A549 (cell line): ENCODE measurements at regions of chr14 and their contacts with region 1.

Region 1: DNA sequence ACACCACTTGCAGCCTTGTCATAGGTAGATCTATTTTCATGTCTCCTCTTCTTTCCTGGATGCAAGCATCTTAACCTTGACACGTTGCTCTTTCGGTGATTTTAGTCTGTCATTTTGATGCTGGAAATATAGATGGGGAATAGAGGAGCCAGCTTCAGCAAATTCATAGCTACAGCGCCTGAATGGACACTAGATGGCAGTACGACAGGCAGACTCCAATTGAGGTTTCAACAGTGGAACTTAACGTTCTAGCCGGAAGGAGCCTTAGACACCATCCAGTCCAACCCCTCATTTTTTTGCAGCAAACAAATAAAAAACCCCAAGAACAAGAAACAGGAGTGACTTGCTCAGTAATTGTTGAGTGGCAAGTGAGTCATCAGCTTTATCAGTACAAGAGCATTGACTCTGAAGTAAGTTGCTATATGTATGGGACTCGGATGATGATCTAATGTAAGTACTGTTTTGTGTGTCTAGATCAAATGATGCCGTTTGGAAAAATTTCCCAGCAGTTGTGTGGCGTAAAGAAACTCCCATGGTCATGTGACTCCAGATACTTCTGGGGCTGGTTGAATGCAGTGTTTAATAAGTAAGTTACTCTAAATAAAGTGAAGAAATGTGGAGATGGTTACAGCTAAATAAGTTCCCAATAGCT is 9.0 kb downstream of the DMAC2L start:
- DNase-seq: peak; percentile 74 to 91
- ATAC-seq: peak; percentile 98 to 100
- H3K4me3 ChIP-seq: peak overlapping the region; percentile 34
- H3K27ac ChIP-seq: peak overlapping the region; percentile 57 to 64; a peak in 5 of 6 replicates
- H3K4me1 ChIP-seq: peaks cover 11% of the 10 kb centered on the region
- CTCF ChIP-seq: peak; percentile 88
- EP300 ChIP-seq: no peak
- POLR2A ChIP-seq: no peak
- RAD21 ChIP-seq: peak; percentile 68 to 70

Region 2: GRCh38 chr14:50222061-50222613 is 99.0 kb before region 1 on chr14:
- CTCF ChIA-PET with region 1: no interaction called
- POLR2A ChIA-PET with region 1: no interaction called
- DNase-seq: no peak
- ATAC-seq: no peak
- H3K4me3 ChIP-seq: no peak overlapping the region
- H3K27ac ChIP-seq: no peak overlapping the region
- H3K4me1 ChIP-seq: peaks cover 31% of the 10 kb centered on the region
- CTCF ChIP-seq: no peak
- EP300 ChIP-seq: no peak
- POLR2A ChIP-seq: no peak
- RAD21 ChIP-seq: no peak

Region 3: DNA sequence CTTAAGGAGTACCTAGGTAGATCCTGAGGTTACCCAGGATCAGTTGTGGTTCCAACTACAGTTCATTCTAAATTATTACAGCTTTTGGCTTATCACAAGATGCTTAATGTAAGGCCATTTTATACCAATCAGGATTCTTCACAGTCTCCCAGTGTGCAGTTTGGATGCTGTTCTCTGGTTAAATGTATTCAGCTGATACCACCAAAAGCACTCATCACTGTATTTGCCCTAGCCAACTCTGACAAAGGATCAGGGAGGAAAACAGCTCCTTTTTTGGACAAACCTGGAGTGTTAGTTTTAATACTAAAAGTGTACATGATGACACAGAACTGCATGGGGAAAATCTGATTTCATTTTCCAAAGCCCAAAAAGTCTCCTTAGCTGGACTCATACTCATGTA is 10.5 kb after region 1 on chr14:
- CTCF ChIA-PET with region 1: interaction called, 17 read pairs
- POLR2A ChIA-PET with region 1: interaction called, 3 read pairs
- DNase-seq: no peak
- ATAC-seq: 0 out of 6 replicates have a peak, but pooled peaks of 1 of the 2 experiments have one; percentile 17
- H3K4me3 ChIP-seq: no peak overlapping the region
- H3K27ac ChIP-seq: no peak overlapping the region
- H3K4me1 ChIP-seq: no peaks in the 10 kb centered on the region
- CTCF ChIP-seq: no peak
- EP300 ChIP-seq: no peak
- POLR2A ChIP-seq: no peak
- RAD21 ChIP-seq: no peak

Region 4: DNA sequence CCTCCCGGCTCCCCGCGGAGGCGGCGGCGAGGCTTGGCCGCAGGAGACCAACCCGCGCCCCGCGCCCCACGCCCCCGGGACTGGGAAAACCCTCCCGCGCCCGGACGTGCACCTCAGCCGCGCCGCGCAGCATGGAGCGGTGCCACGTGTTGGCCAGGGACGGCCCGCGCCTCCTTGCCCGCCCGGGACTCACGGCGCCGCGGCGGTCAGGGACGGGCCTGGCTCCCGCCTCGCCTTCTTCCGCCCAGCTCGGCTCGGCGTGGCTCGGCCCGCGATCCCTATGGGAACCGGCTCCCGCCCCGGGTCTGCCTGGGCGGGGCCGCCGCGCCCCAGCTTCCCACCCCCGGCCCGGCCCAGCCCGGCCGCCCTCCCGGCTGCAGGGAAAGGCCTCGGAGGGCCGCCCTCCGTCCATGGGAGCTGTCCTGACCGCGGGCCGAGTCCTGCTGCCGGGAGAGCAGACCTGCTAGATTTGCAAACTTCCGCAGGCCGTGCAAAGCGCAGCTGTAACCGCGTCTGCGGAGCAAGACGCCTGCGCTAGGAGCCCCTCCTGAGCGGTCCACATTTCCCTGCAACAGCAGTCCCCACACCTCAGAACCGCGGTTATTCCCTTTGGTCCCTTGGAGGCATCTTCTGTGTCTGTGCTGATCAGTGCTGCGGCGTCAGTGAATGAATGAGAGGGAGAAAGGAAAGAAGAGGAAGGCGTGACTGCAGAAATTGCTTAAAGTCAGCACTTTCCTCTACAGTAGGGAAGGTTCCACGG is 75.7 kb after region 1 on chr14 and contains the start of gene CDKL1:
- CTCF ChIA-PET with region 1: interaction called, 13 read pairs
- POLR2A ChIA-PET with region 1: interaction called, 3 read pairs
- DNase-seq: peak; percentile 43 to 69
- ATAC-seq: peak; percentile 85 to 90
- H3K4me3 ChIP-seq: peak within 1 kb of the TSS; percentile 60
- H3K27ac ChIP-seq: peak within 1 kb of the TSS; percentile 81 to 94
- H3K4me1 ChIP-seq: peaks cover 10% of the 10 kb centered on the region
- CTCF ChIP-seq: no peak
- EP300 ChIP-seq: no peak
- POLR2A ChIP-seq: peak; percentile 86
- RAD21 ChIP-seq: no peak
- polyA plus RNA-seq, gene CDKL1: 5.5 and 10.2 TPM in 2 replicates